Caco-2 (cell line): ENCODE measurements at regions of chr1 and their contacts with region 1.

Region 1: DNA sequence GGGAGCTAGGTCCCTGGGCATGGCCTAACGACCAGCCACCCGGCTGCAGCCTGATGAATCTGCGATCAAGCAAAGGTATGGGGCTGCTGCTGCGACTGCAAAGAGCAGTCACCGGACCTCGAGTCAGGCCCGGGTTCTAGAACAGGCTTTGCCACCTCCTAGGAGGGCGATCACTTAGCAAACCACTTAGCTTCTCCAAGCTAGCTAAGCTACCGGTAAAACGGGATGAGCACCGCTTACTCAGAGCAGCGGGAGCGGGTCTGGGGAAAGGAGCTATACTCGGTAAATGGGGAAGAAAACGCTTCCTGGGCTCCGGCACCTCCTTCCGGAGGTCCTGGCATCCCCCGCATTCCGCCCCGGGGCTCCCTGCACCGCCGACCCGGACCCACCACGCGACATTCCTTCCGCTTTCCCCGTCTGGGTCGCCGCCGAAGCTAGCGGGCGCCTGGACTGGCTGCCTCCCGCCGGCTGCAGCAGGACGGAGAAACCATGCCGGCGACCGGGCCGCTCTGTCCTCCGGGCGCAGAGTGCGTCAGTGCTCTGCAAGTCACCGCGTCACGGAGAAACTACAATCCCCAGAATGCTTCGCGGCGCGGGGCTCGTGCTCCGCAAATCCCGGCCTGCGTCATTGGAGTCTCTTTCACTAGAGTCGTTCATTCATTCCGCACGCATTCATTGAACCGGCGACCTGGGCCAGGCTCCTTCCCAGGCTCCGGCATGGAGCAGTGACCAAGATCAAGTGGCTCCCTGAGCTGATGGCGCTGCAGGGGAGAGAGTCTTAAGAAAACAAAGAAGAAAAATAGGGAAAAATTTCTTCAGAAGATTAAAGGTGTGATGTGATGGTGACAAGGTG is at the start of gene LSM10:
- DNase-seq: peak; percentile 86 to 87
- H3K4me3 ChIP-seq: peak within 1 kb of the TSS; percentile 70
- H3K4me3 Mint-ChIP-seq: peak within 1 kb of the TSS; percentile 89
- H3K27ac Mint-ChIP-seq: peak within 1 kb of the TSS; percentile 95
- H3K4me1 ChIP-seq: no peaks in the 10 kb centered on the region
- H3K4me1 Mint-ChIP-seq: peaks cover 7% of the 10 kb centered on the region
- H3K27me3 ChIP-seq: no peaks in the 10 kb centered on the region
- H3K27me3 Mint-ChIP-seq: no peaks in the 10 kb centered on the region
- CTCF ChIP-seq: no peak
- total RNA-seq, gene LSM10: 19.6 and 20.7 TPM in 2 replicates

Region 2: DNA sequence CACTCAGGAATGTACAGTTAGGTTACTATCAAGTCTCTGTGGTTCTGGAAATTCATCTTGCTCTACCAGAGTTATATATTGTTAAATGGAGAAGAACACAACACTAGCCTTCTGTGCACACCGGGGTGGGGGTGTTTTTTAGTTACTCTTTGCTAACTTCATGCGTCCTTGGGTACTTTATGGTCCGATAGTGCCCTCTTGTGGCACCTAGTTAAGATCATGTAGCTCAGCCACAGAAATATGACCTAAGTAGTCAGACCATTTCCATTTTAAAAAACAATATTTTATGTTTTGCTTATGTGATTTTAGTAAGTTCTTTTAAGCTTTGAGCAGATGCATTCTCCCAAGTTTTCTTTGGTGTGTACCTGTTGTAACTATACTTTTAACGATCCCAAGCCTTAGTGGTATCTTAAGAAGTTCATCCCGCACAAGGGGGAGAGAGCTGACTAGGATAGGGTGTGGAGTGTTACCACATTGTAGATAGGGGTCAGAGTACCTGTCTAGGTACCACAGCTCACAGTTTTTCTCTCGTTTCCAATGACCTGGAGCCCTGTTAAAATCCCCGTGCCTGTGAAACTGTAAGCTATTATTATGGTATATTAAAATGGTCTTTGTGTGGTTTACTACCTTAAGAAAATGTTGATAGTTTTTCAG is 112.0 kb before region 1 on chr1:
- CTCF ChIA-PET with region 1: no interaction called
- POLR2A ChIA-PET with region 1: no interaction called
- intact Hi-C with region 1: no loop called
- DNase-seq: peak; percentile 52 to 58
- H3K4me3 ChIP-seq: no peak overlapping the region
- H3K4me3 Mint-ChIP-seq: no peak overlapping the region
- H3K27ac Mint-ChIP-seq: no peak overlapping the region
- H3K4me1 ChIP-seq: no peaks in the 10 kb centered on the region
- H3K4me1 Mint-ChIP-seq: no peaks in the 10 kb centered on the region
- H3K27me3 ChIP-seq: no peaks in the 10 kb centered on the region
- H3K27me3 Mint-ChIP-seq: no peaks in the 10 kb centered on the region
- CTCF ChIP-seq: peak; percentile 45 to 62

Region 3: DNA sequence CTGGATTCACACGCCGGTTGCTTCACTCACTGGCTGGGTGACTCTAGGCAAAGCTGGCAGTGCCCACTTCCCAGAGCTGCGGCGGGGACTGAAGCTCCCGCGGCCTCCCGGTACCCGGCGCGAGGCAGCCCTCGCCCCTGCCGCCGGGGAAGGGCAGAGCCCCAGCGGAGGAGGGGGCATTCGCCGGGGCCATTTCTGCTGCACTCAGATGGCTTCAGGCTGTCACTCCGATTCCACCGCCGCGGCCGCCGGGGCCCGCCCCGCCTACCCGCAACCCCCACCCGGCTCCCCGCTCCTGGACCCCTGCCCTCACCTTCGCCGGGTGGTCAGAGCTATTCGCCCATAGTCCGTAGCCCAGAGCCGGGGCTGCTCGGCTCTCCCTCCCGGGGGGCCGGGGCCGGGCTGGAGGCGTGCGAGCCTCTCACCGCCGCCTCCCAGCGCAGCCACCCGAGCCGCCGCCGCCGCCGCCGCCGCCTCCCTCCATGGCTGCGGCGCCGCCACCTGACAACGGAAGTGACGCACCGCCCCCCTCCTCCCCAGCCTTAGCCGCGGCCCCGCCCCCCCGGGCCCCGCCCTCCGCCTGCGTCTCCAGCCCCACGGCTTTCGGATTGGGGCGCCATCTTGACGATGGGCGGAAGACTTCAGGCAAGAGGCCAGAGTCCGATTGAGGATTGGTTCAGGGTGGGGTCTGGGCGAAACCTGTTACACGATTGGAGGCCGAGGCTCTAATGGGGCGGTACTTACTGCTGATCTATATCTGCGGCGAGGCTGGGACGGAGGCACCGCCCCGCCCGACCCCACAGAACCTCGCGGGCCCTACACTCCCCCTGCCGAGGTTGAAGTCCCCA is 12.0 kb before region 1 on chr1 and contains the start of gene STK40:
- CTCF ChIA-PET with region 1: no interaction called
- POLR2A ChIA-PET with region 1: interaction called, 26 read pairs
- intact Hi-C with region 1: loop called (anchors 1 kb)
- DNase-seq: peak; percentile 94 to 98
- H3K4me3 ChIP-seq: peak within 1 kb of the TSS; percentile 76
- H3K4me3 Mint-ChIP-seq: peak within 1 kb of the TSS; percentile 79
- H3K27ac Mint-ChIP-seq: peak within 1 kb of the TSS; percentile 100
- H3K4me1 ChIP-seq: peaks cover 16% of the 10 kb centered on the region; the same call in 1 of the 2 replicates
- H3K4me1 Mint-ChIP-seq: peaks cover 33% of the 10 kb centered on the region
- H3K27me3 ChIP-seq: no peaks in the 10 kb centered on the region
- H3K27me3 Mint-ChIP-seq: no peaks in the 10 kb centered on the region
- CTCF ChIP-seq: no peak
- total RNA-seq, gene STK40: 26.7 and 29.7 TPM in 2 replicates